ENCODE measurements at regions of chr21 and their contacts with region 1.

Region 1: DNA sequence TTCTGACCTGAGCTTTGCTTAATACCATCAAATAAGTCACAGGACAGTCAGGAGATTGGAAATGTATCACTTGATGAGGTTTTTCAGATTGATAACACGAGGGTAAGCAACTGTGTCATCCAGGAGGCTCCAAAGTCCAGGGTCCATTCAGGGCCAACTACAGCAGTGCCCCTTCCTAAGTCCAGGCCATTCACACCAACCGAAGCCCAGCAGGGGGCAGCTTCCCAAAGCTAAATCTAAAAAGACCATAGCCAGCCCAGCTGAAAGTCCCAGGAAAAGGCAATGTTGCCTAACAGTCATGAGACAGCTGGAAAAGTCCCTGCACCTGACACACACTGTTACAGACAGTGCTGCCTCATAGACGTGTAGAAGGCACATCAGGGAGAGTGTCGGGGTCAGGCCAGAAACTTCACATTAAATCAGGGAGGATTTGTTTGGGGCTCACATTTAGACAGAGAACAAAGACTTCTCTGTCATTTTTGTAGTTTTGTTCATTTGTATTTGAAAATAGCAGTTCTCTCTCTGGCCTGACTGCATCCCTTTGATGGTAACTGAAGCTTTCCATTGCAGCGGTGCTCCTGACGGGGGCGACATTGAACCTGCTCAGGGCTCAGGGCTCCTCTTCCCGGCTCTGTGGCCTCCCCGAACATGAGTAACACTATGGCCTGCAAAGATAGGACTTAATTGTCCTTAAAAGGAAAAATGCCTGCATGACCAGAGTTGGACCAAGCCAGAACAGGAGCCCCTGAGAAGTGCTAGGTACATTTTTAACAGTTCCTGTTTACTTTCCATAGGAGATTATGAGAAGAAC is 200.4 kb downstream of the NRIP1 start:
- DNase-seq: peak in 23 of 35 experiments; percentile 1 to 31 (median 11)
- ATAC-seq: peak in 3 of 4 experiments; percentile 20 to 56 (median 23)
- H3K4me3 ChIP-seq: no peak overlapping the region
- H3K4me3 Mint-ChIP-seq: no peak overlapping the region
- H3K27ac ChIP-seq: no peak overlapping the region
- H3K27ac Mint-ChIP-seq: no peak overlapping the region
- H3K4me1 ChIP-seq: peaks cover 0 to 2% of the 10 kb centered on the region in 2 experiments
- H3K4me1 Mint-ChIP-seq: peaks cover 4 to 9% (median 8%) of the 10 kb centered on the region in 3 donors
- H3K27me3 ChIP-seq: no peaks in the 10 kb centered on the region
- H3K27me3 Mint-ChIP-seq: no peaks in the 10 kb centered on the region

Region 2: DNA sequence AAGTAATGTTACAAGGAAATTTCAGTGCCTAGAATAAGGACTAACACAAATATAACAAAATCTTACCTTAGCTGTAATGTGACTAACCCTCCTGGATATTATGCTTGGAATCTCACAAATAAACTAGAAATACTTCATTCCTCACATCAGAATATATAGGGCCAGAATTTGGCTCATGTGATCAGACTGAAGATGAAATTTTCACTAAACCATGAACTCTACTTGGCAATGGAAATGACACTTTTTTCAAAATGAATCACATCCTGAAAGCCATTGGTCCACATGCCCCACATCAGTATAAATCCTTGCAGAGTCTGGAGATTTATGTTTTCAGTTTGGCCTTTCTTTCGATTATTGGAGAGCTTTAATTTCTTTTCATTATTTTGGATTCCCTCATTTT is 27.5 kb before region 1 on chr21:
- CTCF ChIA-PET with region 1: no interaction called
- POLR2A ChIA-PET with region 1: no interaction called
- DNase-seq: no peak
- ATAC-seq: no peak
- H3K4me3 ChIP-seq: no peak overlapping the region
- H3K4me3 Mint-ChIP-seq: no peak overlapping the region
- H3K27ac ChIP-seq: no peak overlapping the region
- H3K27ac Mint-ChIP-seq: no peak overlapping the region
- H3K4me1 ChIP-seq: no peaks in the 10 kb centered on the region
- H3K4me1 Mint-ChIP-seq: no peaks in the 10 kb centered on the region
- H3K27me3 ChIP-seq: no peaks in the 10 kb centered on the region
- H3K27me3 Mint-ChIP-seq: no peaks in the 10 kb centered on the region

Region 3: DNA sequence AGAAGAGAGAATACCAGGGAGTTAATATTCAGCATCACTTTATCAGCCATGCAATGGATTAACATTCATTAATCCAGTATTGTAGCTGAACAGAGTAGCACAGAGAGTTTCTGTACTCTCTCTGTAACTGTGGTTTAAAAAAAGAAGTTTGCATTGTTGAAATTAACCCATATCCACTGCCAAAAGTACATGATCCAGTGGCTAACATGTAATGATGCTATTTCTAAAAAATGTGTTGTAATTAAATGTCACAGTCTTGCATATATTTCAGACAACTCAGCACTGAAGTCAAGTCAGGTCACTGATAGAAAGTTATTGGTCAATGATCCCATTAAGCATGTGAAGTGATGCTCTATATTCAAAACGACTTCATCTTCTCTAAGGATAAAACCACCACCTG is 59.1 kb after region 1 on chr21:
- CTCF ChIA-PET with region 1: no interaction called
- POLR2A ChIA-PET with region 1: no interaction called
- DNase-seq: no peak
- ATAC-seq: no peak
- H3K4me3 ChIP-seq: no peak overlapping the region
- H3K4me3 Mint-ChIP-seq: no peak overlapping the region
- H3K27ac ChIP-seq: no peak overlapping the region
- H3K27ac Mint-ChIP-seq: no peak overlapping the region
- H3K4me1 ChIP-seq: no peaks in the 10 kb centered on the region
- H3K4me1 Mint-ChIP-seq: no peaks in the 10 kb centered on the region
- H3K27me3 ChIP-seq: no peaks in the 10 kb centered on the region
- H3K27me3 Mint-ChIP-seq: peaks cover 0 to 1% of the 10 kb centered on the region in 2 donors

Region 4: GRCh38 chr21:15140321-15141019 is 276.1 kb after region 1 on chr21:
- CTCF ChIA-PET with region 1: no interaction called
- POLR2A ChIA-PET with region 1: interaction called in 1 of 2 experiments, 11 read pairs
- DNase-seq: no peak
- ATAC-seq: no peak
- H3K4me3 ChIP-seq: no peak overlapping the region
- H3K4me3 Mint-ChIP-seq: no peak overlapping the region
- H3K27ac ChIP-seq: no peak overlapping the region
- H3K27ac Mint-ChIP-seq: no peak overlapping the region
- H3K4me1 ChIP-seq: no peaks in the 10 kb centered on the region
- H3K4me1 Mint-ChIP-seq: peaks cover 0 to 5% (median 0%) of the 10 kb centered on the region in 3 donors
- H3K27me3 ChIP-seq: peaks cover 0 to 4% of the 10 kb centered on the region in 2 experiments
- H3K27me3 Mint-ChIP-seq: peaks cover 13 to 14% of the 10 kb centered on the region in 2 donors

Measured in T-cell (primary cell).